IMR-90 (cell line): ENCODE measurements at regions of chr1 and their contacts with region 1.

Region 1: DNA sequence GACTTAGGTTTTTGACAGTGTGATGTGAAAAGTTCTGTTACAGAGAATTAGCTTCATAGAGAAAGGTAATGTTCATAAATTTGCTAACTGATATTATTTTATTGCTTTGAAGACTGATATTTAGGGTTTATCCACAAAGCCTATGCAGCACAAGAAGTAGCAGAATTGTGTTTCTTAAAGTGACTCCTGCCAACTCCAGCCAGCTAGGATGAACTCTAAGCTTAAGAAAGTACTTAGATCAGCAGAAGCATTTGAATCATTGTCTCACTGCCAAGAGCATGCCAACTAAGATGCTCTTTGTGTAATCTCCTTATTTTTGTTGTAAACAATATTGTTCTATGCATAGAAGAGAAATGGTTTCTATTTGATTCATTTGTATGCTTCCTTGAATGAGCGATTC is 589.4 kb upstream of the ADGRL4 start:
- DNase-seq: no peak
- ATAC-seq: no peak
- H3K4me3 ChIP-seq: no peak overlapping the region
- H3K27ac ChIP-seq: no peak overlapping the region
- H3K4me1 ChIP-seq: no peaks in the 10 kb centered on the region
- H3K27me3 ChIP-seq: no peaks in the 10 kb centered on the region
- CTCF ChIP-seq: no peak
- POLR2A ChIP-seq: no peak
- RAD21 ChIP-seq: no peak

Region 2: DNA sequence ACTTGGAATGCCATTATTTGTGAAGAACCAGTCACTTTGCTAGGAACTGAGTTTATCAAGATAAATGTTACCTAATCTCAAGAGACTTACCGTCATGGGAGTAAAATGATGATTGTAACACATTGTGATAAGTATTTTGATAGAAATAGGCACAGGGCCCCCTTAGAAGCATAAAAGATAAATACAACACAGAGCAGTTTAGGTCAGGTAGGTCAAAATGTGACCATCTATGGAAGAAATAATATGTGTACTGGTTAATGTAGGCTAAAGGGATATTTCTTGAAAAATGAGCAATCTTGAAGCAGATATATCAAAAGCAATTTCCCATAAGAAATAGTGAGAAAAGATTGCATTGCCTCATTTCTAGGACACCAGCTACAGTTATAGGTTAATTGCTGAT is 818.0 kb after region 1 on chr1:
- CTCF ChIA-PET with region 1: no interaction called
- POLR2A ChIA-PET with region 1: interaction called, 28 read pairs
- dilution Hi-C with region 1: no loop called
- in situ Hi-C with region 1: no loop called
- intact Hi-C with region 1: no loop called
- DNase-seq: no peak
- ATAC-seq: no peak
- H3K4me3 ChIP-seq: no peak overlapping the region
- H3K27ac ChIP-seq: no peak overlapping the region
- H3K4me1 ChIP-seq: no peaks in the 10 kb centered on the region; the same call in 1 of the 2 replicates
- H3K27me3 ChIP-seq: no peaks in the 10 kb centered on the region
- CTCF ChIP-seq: no peak
- POLR2A ChIP-seq: no peak
- RAD21 ChIP-seq: no peak